Calu3 (cell line): ENCODE measurements at regions of chr5 and their contacts with region 1.

Region 1: DNA sequence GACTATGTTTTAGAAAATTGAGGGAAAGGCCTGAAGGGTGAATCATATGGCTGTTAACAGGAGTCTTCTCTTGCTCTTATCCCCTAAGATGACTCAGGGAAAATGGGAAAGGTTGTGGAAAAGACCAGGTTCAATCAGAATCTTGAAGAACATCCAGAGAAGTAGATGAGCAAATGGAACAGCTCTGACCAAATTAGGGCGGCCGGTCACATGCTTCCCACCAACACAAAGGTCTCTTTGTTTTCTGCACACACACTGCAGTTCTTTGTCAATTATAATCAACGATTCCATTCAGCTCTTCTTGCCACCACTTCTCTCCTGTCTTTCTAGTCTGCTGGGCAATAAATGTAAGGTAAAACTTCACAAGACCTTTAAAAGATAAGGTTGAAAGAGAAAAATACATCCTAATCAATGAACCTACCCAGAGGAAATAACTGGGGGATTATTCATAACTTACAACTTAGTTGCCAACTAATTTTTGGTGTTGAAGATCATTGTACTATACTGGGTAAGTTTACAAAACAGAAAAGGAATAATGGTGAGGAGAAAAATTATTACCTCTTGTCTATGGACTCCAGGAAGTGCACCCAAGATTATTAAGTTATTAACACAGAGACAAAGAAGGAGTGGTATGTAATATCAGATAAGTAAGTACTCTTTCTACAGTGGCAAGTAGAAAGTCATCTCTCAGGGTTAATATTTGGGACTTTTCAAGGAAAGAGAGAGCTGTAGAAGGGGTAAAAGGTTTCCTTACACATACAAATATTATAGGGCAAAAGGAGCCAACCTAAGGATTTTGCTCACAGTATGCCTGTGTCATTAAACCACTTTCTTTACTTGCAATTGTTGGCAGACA is 441.9 kb upstream of the PIK3R1 start:
- DNase-seq: peak; percentile 75
- H3K4me3 Mint-ChIP-seq: peak overlapping the region; percentile 49
- H3K27ac Mint-ChIP-seq: peak overlapping the region; percentile 100
- H3K4me1 Mint-ChIP-seq: peaks cover 67% of the 10 kb centered on the region
- H3K27me3 Mint-ChIP-seq: no peaks in the 10 kb centered on the region
- CTCF ChIP-seq: no peak

Region 2: GRCh38 chr5:67246108-67246507 is 527.5 kb before region 1 on chr5:
- CTCF ChIA-PET with region 1: interaction called, 4 read pairs
- intact Hi-C with region 1: loop called (anchors 2 kb)
- DNase-seq: peak; percentile 47
- H3K4me3 Mint-ChIP-seq: no peak overlapping the region
- H3K27ac Mint-ChIP-seq: no peak overlapping the region
- H3K4me1 Mint-ChIP-seq: peaks cover 8% of the 10 kb centered on the region
- H3K27me3 Mint-ChIP-seq: no peaks in the 10 kb centered on the region
- CTCF ChIP-seq: peak; percentile 58

Region 3: GRCh38 chr5:67453111-67453905 is 320.3 kb before region 1 on chr5:
- CTCF ChIA-PET with region 1: no interaction called
- intact Hi-C with region 1: no loop called
- DNase-seq: no peak
- H3K4me3 Mint-ChIP-seq: no peak overlapping the region
- H3K27ac Mint-ChIP-seq: no peak overlapping the region
- H3K4me1 Mint-ChIP-seq: no peaks in the 10 kb centered on the region
- H3K27me3 Mint-ChIP-seq: no peaks in the 10 kb centered on the region
- CTCF ChIP-seq: no peak

Region 4: GRCh38 chr5:67648201-67648671 is 125.4 kb before region 1 on chr5:
- CTCF ChIA-PET with region 1: no interaction called
- intact Hi-C with region 1: loop called (anchors 1 kb)
- DNase-seq: peak; percentile 32
- H3K4me3 Mint-ChIP-seq: peak overlapping the region; percentile 45
- H3K27ac Mint-ChIP-seq: peak overlapping the region; percentile 60
- H3K4me1 Mint-ChIP-seq: peaks cover 32% of the 10 kb centered on the region
- H3K27me3 Mint-ChIP-seq: no peaks in the 10 kb centered on the region
- CTCF ChIP-seq: no peak

Region 5: DNA sequence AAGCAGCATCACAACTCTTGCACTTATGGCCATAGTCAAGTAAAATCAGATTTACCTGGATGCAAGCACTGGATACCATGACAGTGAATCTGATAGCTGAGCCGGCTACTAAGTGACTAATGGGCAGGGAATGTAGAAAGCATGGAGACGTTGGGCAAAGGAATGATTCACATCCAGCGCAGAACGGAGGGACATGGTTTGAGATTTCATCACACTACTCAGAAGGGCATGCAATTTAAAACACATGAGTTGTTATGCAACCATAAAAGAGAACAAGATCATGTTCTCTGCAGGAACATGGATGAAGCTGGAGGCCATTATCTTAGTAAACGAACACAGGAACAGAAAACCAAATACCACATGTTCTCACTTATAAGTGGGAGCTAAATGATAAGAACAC is 272.8 kb after region 1 on chr5:
- CTCF ChIA-PET with region 1: no interaction called
- intact Hi-C with region 1: loop called (anchors 5 kb)
- DNase-seq: peak; percentile 57
- H3K4me3 Mint-ChIP-seq: no peak overlapping the region
- H3K27ac Mint-ChIP-seq: peak overlapping the region; percentile 87
- H3K4me1 Mint-ChIP-seq: peaks cover 21% of the 10 kb centered on the region
- H3K27me3 Mint-ChIP-seq: no peaks in the 10 kb centered on the region
- CTCF ChIP-seq: no peak

Region 6: DNA sequence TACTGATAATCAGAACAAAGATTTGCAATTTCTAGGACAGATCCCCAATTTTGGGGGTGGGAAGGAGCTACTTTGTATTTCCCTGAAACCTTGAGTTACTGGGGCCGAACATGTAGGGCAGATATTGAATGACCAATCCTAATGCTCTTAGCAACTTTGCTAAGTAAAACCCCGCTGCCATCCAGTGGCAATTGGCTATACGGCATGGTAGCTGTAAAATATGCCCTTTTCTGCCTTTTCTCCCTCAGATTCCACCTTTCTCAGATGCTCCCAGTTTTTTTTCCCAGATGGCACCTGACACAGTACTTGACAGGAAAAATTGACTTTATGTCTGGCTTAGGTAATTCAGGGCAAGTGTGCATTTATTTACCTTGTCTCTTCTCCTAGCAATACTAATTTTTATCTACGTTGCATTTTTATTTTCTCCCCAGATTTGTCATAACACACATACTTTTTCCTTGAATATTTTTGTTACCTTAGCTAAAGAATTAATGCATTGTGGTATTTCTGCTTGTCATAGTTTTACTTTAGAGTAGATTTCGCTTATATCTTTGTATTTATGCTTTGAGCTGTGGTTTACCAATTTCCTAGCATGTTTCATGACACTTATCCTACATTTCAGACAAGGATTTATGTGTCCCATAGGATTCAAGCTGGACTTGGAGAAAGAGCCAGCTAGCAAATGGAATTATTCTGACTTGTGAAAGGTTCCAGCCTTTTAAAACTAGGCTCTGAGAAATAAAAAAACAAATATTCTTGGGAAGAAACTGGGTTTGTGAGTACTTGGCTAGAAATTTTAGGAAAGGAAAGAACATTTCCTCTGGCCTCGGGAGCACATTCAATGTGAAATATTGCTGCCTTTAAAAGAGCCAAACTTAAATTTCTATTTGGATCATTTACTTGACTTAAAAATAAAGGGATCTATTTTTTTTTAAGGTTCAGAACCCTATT is 479.3 kb after region 1 on chr5:
- CTCF ChIA-PET with region 1: no interaction called
- intact Hi-C with region 1: loop called (anchors 5 kb)
- DNase-seq: peak; percentile 67
- H3K4me3 Mint-ChIP-seq: no peak overlapping the region
- H3K27ac Mint-ChIP-seq: no peak overlapping the region
- H3K4me1 Mint-ChIP-seq: peaks cover 62% of the 10 kb centered on the region
- H3K27me3 Mint-ChIP-seq: no peaks in the 10 kb centered on the region
- CTCF ChIP-seq: peak; percentile 49

Region 7: GRCh38 chr5:68460147-68460798 is 686.6 kb after region 1 on chr5:
- CTCF ChIA-PET with region 1: no interaction called
- intact Hi-C with region 1: loop called (anchors 5 kb)
- DNase-seq: peak; percentile 52
- H3K4me3 Mint-ChIP-seq: no peak overlapping the region
- H3K27ac Mint-ChIP-seq: no peak overlapping the region
- H3K4me1 Mint-ChIP-seq: peaks cover 49% of the 10 kb centered on the region
- H3K27me3 Mint-ChIP-seq: no peaks in the 10 kb centered on the region
- CTCF ChIP-seq: peak; percentile 24